Activated CD4-positive, alpha-beta T cell treated with anti-CD3 and anti-CD28 coated beads, Interleukin-2, amount 10 ng/mL, durations not matched to agents 24 days and 14 days (primary cell): ENCODE measurements at regions of chr18 and their contacts with region 1.

Region 1: GRCh38 chr18:3454365-3455089 is 4.6 kb downstream of the TGIF1 start:
- DNase-seq: peak; percentile 84
- H3K4me3 Mint-ChIP-seq: peak overlapping the region; percentile 96
- H3K27ac Mint-ChIP-seq: peak overlapping the region; percentile 100
- H3K4me1 Mint-ChIP-seq: peaks cover 66% of the 10 kb centered on the region
- H3K27me3 Mint-ChIP-seq: no peaks in the 10 kb centered on the region

Region 2: GRCh38 chr18:3269241-3269913 is 185.2 kb before region 1 on chr18:
- intact Hi-C with region 1: no loop called
- DNase-seq: no peak
- H3K4me3 Mint-ChIP-seq: peak overlapping the region; percentile 2
- H3K27ac Mint-ChIP-seq: peak overlapping the region; percentile 17
- H3K4me1 Mint-ChIP-seq: peaks cover 66% of the 10 kb centered on the region
- H3K27me3 Mint-ChIP-seq: no peaks in the 10 kb centered on the region

Region 3: GRCh38 chr18:3281456-3282400 is 172.8 kb before region 1 on chr18:
- intact Hi-C with region 1: loop called (anchors 2 kb)
- DNase-seq: peak; percentile 79
- H3K4me3 Mint-ChIP-seq: no peak overlapping the region
- H3K27ac Mint-ChIP-seq: no peak overlapping the region
- H3K4me1 Mint-ChIP-seq: peaks cover 4% of the 10 kb centered on the region
- H3K27me3 Mint-ChIP-seq: peaks cover 3% of the 10 kb centered on the region

Region 4: DNA sequence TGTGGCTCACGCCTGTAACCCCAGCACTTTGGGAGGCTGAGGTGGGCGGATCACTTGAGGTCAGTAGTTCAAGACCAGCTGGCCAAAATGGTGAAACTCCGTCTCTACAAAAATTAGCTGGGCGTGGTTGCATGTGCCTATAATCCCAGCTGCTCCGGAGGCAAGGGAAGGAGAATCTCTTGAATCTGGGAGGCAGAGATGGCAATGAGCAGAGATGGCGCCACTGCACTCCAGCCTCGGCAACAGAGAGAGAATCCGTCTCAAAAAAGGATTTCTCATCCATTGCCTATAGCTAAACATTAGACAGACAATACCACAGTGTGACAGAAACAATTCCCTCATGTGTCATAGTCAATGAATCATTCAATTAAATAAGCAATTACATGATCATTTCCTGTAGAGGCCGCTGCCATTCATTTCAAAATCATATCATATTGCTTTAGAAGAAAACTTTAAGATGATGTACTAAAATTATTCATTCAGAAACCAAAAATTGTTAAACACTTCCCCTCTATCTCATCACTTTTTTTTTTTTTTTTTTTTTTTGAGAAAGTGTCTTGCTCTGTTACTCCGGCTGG is 74.1 kb before region 1 on chr18:
- intact Hi-C with region 1: loop called (anchors 2 kb)
- DNase-seq: no peak
- H3K4me3 Mint-ChIP-seq: no peak overlapping the region
- H3K27ac Mint-ChIP-seq: no peak overlapping the region
- H3K4me1 Mint-ChIP-seq: peaks cover 2% of the 10 kb centered on the region
- H3K27me3 Mint-ChIP-seq: peaks cover 6% of the 10 kb centered on the region

Region 5: GRCh38 chr18:3500016-3500415 is 45.5 kb after region 1 on chr18:
- intact Hi-C with region 1: loop called (anchors 1 kb)
- DNase-seq: no peak
- H3K4me3 Mint-ChIP-seq: no peak overlapping the region
- H3K27ac Mint-ChIP-seq: no peak overlapping the region
- H3K4me1 Mint-ChIP-seq: peaks cover 10% of the 10 kb centered on the region
- H3K27me3 Mint-ChIP-seq: peaks cover 38% of the 10 kb centered on the region

Region 6: GRCh38 chr18:3526421-3527354 is 72.2 kb after region 1 on chr18:
- intact Hi-C with region 1: no loop called
- DNase-seq: no peak
- H3K4me3 Mint-ChIP-seq: peak overlapping the region; percentile 19
- H3K27ac Mint-ChIP-seq: no peak overlapping the region
- H3K4me1 Mint-ChIP-seq: peaks cover 13% of the 10 kb centered on the region
- H3K27me3 Mint-ChIP-seq: no peaks in the 10 kb centered on the region

Region 7: GRCh38 chr18:3585656-3586509 is 131.4 kb after region 1 on chr18:
- intact Hi-C with region 1: loop called (anchors 1 kb)
- DNase-seq: peak; percentile 90
- H3K4me3 Mint-ChIP-seq: no peak overlapping the region
- H3K27ac Mint-ChIP-seq: peak overlapping the region; percentile 84
- H3K4me1 Mint-ChIP-seq: peaks cover 36% of the 10 kb centered on the region
- H3K27me3 Mint-ChIP-seq: no peaks in the 10 kb centered on the region